ENCODE measurements at regions of chr10 and their contacts with region 1.

Region 1: GRCh38 chr10:73879296-73880173 is 5.2 kb upstream of the CAMK2G start:
- DNase-seq: no peak
- ATAC-seq: peak; percentile 94
- H3K4me3 ChIP-seq: no peak overlapping the region
- H3K27ac ChIP-seq: no peak overlapping the region
- H3K4me1 ChIP-seq: peaks cover 11% of the 10 kb centered on the region
- H3K27me3 ChIP-seq: no peaks in the 10 kb centered on the region
- CTCF ChIP-seq: peak; percentile 95 to 99 (median 97)
- EP300 ChIP-seq: peak in 1 of 2 experiments; percentile 48; a peak in 2 of 4 replicates
- POLR2A ChIP-seq: no peak
- RAD21 ChIP-seq: peak; percentile 91

Region 2: GRCh38 chr10:73650537-73651331 is 228.8 kb before region 1 on chr10:
- CTCF ChIA-PET with region 1: interaction called, 14 read pairs
- POLR2A ChIA-PET with region 1: no interaction called
- RAD21 ChIA-PET with region 1: interaction called, 11 read pairs
- SMC1A ChIA-PET with region 1: interaction called, 6 read pairs
- in situ Hi-C with region 1: no loop called
- intact Hi-C with region 1: no loop called
- DNase-seq: peak; percentile 65
- ATAC-seq: peak; percentile 70
- H3K4me3 ChIP-seq: no peak overlapping the region
- H3K27ac ChIP-seq: peak overlapping the region; percentile 77
- H3K4me1 ChIP-seq: peaks cover 25% of the 10 kb centered on the region
- H3K27me3 ChIP-seq: no peaks in the 10 kb centered on the region
- CTCF ChIP-seq: no peak
- EP300 ChIP-seq: peak; percentile 26 to 45; a peak in 1 of 4 replicates
- POLR2A ChIP-seq: no peak
- RAD21 ChIP-seq: no peak

Region 3: GRCh38 chr10:73810735-73811465 is 68.6 kb before region 1 on chr10:
- CTCF ChIA-PET with region 1: interaction called, 6 read pairs
- POLR2A ChIA-PET with region 1: interaction called, 9 read pairs
- RAD21 ChIA-PET with region 1: interaction called, 16 read pairs
- SMC1A ChIA-PET with region 1: interaction called, 14 read pairs
- in situ Hi-C with region 1: no loop called
- intact Hi-C with region 1: no loop called
- DNase-seq: no peak
- ATAC-seq: peak; percentile 56
- H3K4me3 ChIP-seq: peak overlapping the region; percentile 81
- H3K27ac ChIP-seq: peak overlapping the region; percentile 80
- H3K4me1 ChIP-seq: peaks cover 6% of the 10 kb centered on the region
- H3K27me3 ChIP-seq: no peaks in the 10 kb centered on the region
- CTCF ChIP-seq: no peak
- EP300 ChIP-seq: no peak
- POLR2A ChIP-seq: no peak
- RAD21 ChIP-seq: no peak

Region 4: GRCh38 chr10:73894245-73894971 is 14.9 kb after region 1 on chr10:
- CTCF ChIA-PET with region 1: interaction called, 84 read pairs
- POLR2A ChIA-PET with region 1: no interaction called
- RAD21 ChIA-PET with region 1: interaction called, 20 read pairs
- SMC1A ChIA-PET with region 1: interaction called, 36 read pairs
- in situ Hi-C with region 1: no loop called
- intact Hi-C with region 1: no loop called
- DNase-seq: no peak
- ATAC-seq: peak; percentile 87
- H3K4me3 ChIP-seq: no peak overlapping the region
- H3K27ac ChIP-seq: no peak overlapping the region
- H3K4me1 ChIP-seq: no peaks in the 10 kb centered on the region
- H3K27me3 ChIP-seq: no peaks in the 10 kb centered on the region
- CTCF ChIP-seq: no peak
- EP300 ChIP-seq: no peak
- POLR2A ChIP-seq: no peak
- RAD21 ChIP-seq: no peak

Region 5: DNA sequence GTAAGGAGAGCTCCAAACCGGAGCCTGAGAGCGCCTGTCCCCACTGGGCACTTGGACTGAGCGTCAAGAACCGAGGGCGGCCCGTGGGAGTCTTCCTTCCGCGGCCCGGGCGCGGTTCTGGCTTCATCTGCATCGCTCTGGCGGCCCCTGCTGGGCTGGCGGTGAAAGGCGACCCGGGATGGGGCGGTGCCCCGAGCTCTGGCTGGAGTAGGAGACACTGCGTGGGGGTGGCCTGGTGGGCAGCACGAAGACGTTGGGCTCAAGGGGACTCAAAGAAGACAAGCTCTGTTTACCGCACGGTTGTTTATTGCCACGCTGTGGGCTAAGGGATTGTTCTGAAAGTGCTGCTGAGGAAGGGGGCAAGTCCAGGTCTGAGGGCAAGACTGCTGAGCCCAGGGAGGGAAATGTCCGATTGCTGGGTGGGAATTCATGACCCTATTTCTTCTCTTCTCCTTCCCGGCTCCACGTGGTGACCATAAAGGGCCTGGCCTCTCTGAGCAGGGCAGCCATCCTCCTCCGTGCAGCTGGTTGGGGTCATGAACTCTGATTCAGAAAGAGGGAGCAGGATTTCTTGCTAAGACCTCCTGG is 61.2 kb after region 1 on chr10:
- CTCF ChIA-PET with region 1: interaction called, 930 read pairs
- POLR2A ChIA-PET with region 1: interaction called, 6 read pairs
- RAD21 ChIA-PET with region 1: interaction called, 616 read pairs
- SMC1A ChIA-PET with region 1: interaction called, 1,048 read pairs
- in situ Hi-C with region 1: no loop called
- intact Hi-C with region 1: no loop called
- DNase-seq: no peak
- ATAC-seq: peak; percentile 100
- H3K4me3 ChIP-seq: no peak overlapping the region
- H3K27ac ChIP-seq: no peak overlapping the region
- H3K4me1 ChIP-seq: no peaks in the 10 kb centered on the region
- H3K27me3 ChIP-seq: no peaks in the 10 kb centered on the region
- CTCF ChIP-seq: peak; percentile 92 to 99 (median 97)
- EP300 ChIP-seq: no peak
- POLR2A ChIP-seq: no peak
- RAD21 ChIP-seq: peak; percentile 98

Region 6: DNA sequence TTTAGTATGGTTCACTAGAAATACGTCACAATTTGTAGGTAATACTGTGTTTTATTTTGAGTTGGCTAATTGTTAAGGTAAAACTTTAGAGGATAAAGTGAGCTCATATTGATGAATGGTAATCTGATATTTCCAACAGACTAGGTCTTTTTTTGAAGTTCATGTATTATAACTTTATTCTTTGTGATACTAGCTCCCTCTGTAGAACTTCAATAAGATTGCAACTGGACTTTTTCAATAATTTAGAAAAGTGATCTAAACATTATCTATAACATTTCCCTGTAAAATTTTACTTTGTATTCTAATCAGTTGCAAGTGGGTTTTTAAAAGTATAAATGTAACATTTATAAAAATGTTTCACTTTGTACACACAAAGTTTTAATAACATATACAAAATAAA is 355.0 kb after region 1 on chr10:
- CTCF ChIA-PET with region 1: interaction called, 6 read pairs
- POLR2A ChIA-PET with region 1: no interaction called
- RAD21 ChIA-PET with region 1: no interaction called
- SMC1A ChIA-PET with region 1: no interaction called
- in situ Hi-C with region 1: loop called (anchors 10 kb)
- intact Hi-C with region 1: no loop called
- DNase-seq: no peak
- ATAC-seq: no peak; the same call in 2 of the 3 replicates
- H3K4me3 ChIP-seq: no peak overlapping the region
- H3K27ac ChIP-seq: no peak overlapping the region
- H3K4me1 ChIP-seq: no peaks in the 10 kb centered on the region
- H3K27me3 ChIP-seq: no peaks in the 10 kb centered on the region
- CTCF ChIP-seq: peak in 2 of 3 experiments; percentile 35 to 43; a peak in 2 of 6 replicates
- EP300 ChIP-seq: no peak
- POLR2A ChIP-seq: no peak
- RAD21 ChIP-seq: peak; percentile 39